Activated CD4-positive, alpha-beta T cell treated with anti-CD3 and anti-CD28 coated beads for 36 hours (primary cell): ENCODE measurements at regions of chr7 and their contacts with region 1.

Region 1: GRCh38 chr7:106999023-106999422 is 45.5 kb upstream of the PRKAR2B start:
- DNase-seq: no peak
- ATAC-seq: no peak
- H3K4me3 Mint-ChIP-seq: no peak overlapping the region
- H3K27ac Mint-ChIP-seq: no peak overlapping the region
- H3K4me1 Mint-ChIP-seq: no peaks in the 10 kb centered on the region
- H3K27me3 Mint-ChIP-seq: peaks cover 5% of the 10 kb centered on the region

Region 2: DNA sequence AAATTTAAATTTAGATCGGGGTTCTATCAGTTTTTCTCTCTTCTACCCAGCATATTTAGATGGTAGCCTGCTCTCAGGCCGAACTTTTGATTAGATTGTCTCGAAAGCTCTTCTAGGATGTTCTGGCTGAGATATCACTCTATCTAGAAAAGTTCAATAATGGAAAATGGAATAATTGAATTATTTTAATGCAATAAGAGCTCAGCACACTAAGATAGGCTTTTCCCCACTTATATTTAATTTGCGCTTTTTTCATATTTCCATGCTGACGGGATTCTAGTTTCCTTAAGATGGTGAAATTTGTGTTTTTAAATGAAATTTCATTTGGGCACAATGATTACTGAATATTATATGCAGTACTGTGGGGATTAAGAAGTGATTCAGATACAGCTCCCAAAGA is 60.2 kb before region 1 on chr7:
- CTCF ChIA-PET with region 1: no interaction called
- POLR2A ChIA-PET with region 1: no interaction called
- intact Hi-C with region 1: loop called in 1 of 2 experiments (anchors 10 kb)
- DNase-seq: no peak
- ATAC-seq: no peak
- H3K4me3 Mint-ChIP-seq: no peak overlapping the region
- H3K27ac Mint-ChIP-seq: no peak overlapping the region
- H3K4me1 Mint-ChIP-seq: no peaks in the 10 kb centered on the region
- H3K27me3 Mint-ChIP-seq: no peaks in the 10 kb centered on the region

Region 3: GRCh38 chr7:107014387-107015023 is 15.5 kb after region 1 on chr7:
- CTCF ChIA-PET with region 1: no interaction called
- POLR2A ChIA-PET with region 1: interaction called, 13 read pairs
- intact Hi-C with region 1: no loop called
- DNase-seq: no peak
- ATAC-seq: no peak
- H3K4me3 Mint-ChIP-seq: no peak overlapping the region
- H3K27ac Mint-ChIP-seq: no peak overlapping the region
- H3K4me1 Mint-ChIP-seq: no peaks in the 10 kb centered on the region
- H3K27me3 Mint-ChIP-seq: peaks cover 4% of the 10 kb centered on the region

Region 4: GRCh38 chr7:107090457-107090856 is 91.4 kb after region 1 on chr7:
- CTCF ChIA-PET with region 1: no interaction called
- POLR2A ChIA-PET with region 1: no interaction called
- intact Hi-C with region 1: no loop called
- DNase-seq: no peak
- ATAC-seq: no peak
- H3K4me3 Mint-ChIP-seq: no peak overlapping the region
- H3K27ac Mint-ChIP-seq: no peak overlapping the region
- H3K4me1 Mint-ChIP-seq: no peaks in the 10 kb centered on the region
- H3K27me3 Mint-ChIP-seq: no peaks in the 10 kb centered on the region